ENCODE measurements at regions of chr17 and their contacts with region 1.

Region 1: DNA sequence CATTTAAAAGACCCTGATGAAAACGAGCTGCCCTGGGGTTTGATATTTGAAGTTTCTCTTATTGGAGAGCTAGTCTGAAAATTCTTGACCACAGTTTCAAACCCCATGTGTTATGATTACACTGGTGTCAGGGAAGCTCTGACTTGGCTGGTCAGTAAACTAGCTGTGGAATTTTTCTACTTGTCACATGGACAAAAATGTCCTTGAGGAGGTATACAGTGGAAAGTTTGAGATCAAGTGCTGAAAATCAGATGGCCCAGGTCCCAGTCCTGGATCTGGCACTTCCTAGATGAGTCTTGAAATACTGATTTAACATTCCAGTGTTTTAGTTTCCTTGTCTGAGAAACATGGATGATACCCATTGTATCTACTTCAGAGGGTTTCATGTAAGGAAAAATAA is 30.7 kb upstream of the SOX9 start:
- DNase-seq: no peak
- ATAC-seq: peak in 7 of 8 donors; percentile 62 to 85 (median 76)
- H3K4me3 ChIP-seq: no peak overlapping the region
- H3K27ac ChIP-seq: peak overlapping the region in 5 of 10 donors; percentile 6 to 58 (median 52)
- H3K4me1 ChIP-seq: peaks cover 0 to 15% (median 6%) of the 10 kb centered on the region in 9 donors
- H3K27me3 ChIP-seq: no peaks in the 10 kb centered on the region
- CTCF ChIP-seq: no peak

Region 2: GRCh38 chr17:70261170-70261569 is 1828.9 kb before region 1 on chr17:
- intact Hi-C with region 1: loop called in 1 of 10 experiments (anchors 5 kb)
- DNase-seq: no peak
- ATAC-seq: no peak
- H3K4me3 ChIP-seq: no peak overlapping the region
- H3K27ac ChIP-seq: no peak overlapping the region
- H3K4me1 ChIP-seq: peaks cover 0 to 8% (median 0%) of the 10 kb centered on the region in 9 donors
- H3K27me3 ChIP-seq: no peaks in the 10 kb centered on the region
- CTCF ChIP-seq: no peak

Measured in heart right ventricle (tissue), 16 donors.